ENCODE measurements at regions of chr20 and their contacts with region 1.

Region 1: GRCh38 chr20:5569021-5569420 is 181.2 kb upstream of the SHLD1 start:
- DNase-seq: peak; percentile 68
- ATAC-seq: peak; percentile 87
- H3K4me3 Mint-ChIP-seq: no peak overlapping the region
- H3K27ac Mint-ChIP-seq: peak overlapping the region; percentile 37
- H3K4me1 Mint-ChIP-seq: peaks cover 15% of the 10 kb centered on the region
- H3K27me3 Mint-ChIP-seq: no peaks in the 10 kb centered on the region

Region 2: DNA sequence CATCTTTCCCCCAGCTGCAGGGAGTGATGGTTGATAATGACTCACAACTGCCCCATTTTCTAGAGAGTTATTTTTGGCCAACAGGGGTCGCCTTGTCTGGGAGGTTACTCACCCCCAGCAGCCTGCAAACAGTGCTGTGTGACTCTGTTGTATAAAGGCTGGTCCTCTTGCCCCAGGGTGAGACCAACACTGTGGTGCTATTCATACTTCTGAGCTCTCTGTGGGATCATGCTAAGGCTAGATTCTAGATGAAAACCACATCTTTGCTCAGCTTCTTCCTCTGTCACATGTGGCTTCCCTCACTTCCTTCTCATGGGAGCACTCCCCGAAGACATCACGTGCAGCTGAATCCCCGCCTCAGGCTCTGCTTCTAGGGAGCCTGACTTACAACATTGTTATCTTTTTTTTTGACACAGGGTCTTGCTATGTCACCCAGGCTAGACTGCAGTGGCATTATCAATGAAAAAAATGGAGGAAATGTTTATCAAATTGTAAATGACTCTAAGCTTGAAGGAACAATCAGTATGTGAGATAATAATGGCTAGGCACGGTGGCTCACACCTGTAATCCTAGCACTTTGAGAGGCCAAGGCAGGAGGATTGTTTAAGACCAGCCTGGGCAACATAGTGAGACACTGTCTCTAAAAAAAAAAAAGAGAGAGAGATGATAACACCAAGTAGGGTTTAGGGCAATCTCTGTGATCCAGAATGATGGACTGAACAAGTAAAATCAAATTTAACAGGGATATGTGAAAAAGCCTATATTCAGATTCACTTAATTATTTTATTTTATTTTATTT is 512.0 kb before region 1 on chr20:
- CTCF ChIA-PET with region 1: no interaction called
- POLR2A ChIA-PET with region 1: no interaction called
- DNase-seq: peak; percentile 90
- ATAC-seq: peak; percentile 100
- H3K4me3 Mint-ChIP-seq: no peak overlapping the region
- H3K27ac Mint-ChIP-seq: peak overlapping the region; percentile 87
- H3K4me1 Mint-ChIP-seq: peaks cover 31% of the 10 kb centered on the region
- H3K27me3 Mint-ChIP-seq: peaks cover 1% of the 10 kb centered on the region

Region 3: DNA sequence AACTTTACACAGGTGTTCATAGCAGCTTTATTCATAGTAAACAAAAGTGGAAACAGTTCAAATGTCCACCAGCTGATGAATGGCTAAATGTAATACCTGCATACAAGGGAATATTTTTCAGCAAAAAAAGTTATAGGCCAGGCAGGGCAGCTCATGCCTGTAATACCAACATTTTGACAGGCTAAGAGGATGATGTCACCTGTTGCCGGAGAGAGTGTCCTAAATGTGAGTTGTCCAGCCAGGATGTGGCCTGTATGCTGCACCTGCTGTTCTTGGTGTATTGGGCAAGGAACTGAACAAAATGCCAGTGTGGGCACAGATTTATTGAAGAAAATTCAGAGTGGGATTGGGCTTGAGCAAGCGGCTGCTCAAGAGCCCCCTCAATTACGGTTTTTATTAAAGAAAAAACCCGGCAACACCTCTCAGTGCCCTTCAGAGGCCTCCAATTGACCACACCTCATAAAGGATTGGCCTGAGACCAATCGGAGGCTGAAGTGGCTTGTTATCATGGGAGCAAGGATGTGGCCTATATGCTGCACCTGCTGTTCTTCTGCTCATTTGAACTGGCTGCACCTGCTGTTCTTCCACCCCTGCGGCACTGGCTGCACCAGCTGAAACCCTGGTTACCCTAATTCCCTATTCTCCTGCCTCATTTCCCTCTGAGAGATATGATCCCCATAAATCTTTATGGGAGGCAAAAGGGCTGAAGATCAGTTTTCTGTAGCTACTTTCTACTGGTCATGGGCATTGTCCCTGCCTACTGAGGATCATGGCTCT is 88.0 kb before region 1 on chr20:
- CTCF ChIA-PET with region 1: no interaction called
- POLR2A ChIA-PET with region 1: no interaction called
- DNase-seq: no peak
- ATAC-seq: no peak
- H3K4me3 Mint-ChIP-seq: no peak overlapping the region
- H3K27ac Mint-ChIP-seq: no peak overlapping the region
- H3K4me1 Mint-ChIP-seq: peaks cover 23% of the 10 kb centered on the region
- H3K27me3 Mint-ChIP-seq: peaks cover under 1% of the 10 kb centered on the region

Region 4: DNA sequence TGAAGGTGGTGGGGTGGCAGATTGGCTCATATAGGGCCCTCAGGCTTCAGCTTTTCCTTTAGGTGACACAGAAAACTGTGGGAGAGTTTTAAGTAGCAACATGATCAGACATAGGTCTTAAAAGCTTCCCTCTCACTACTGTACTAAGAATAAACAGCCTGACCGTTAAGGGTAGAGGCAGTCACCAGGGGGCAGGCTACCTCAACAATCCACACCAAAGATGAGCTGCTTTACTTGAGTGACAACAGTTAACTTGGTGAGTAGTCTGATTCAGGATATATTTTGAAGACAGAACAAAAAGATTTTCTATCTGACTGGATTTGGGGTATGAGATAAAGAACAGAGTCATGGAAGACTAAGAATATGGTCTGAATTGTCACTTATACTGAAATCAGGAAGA is 11.9 kb before region 1 on chr20:
- CTCF ChIA-PET with region 1: interaction called, 67 read pairs
- POLR2A ChIA-PET with region 1: no interaction called
- DNase-seq: peak; percentile 73
- ATAC-seq: peak; percentile 82
- H3K4me3 Mint-ChIP-seq: no peak overlapping the region
- H3K27ac Mint-ChIP-seq: peak overlapping the region; percentile 16
- H3K4me1 Mint-ChIP-seq: no peaks in the 10 kb centered on the region
- H3K27me3 Mint-ChIP-seq: no peaks in the 10 kb centered on the region

Region 5: DNA sequence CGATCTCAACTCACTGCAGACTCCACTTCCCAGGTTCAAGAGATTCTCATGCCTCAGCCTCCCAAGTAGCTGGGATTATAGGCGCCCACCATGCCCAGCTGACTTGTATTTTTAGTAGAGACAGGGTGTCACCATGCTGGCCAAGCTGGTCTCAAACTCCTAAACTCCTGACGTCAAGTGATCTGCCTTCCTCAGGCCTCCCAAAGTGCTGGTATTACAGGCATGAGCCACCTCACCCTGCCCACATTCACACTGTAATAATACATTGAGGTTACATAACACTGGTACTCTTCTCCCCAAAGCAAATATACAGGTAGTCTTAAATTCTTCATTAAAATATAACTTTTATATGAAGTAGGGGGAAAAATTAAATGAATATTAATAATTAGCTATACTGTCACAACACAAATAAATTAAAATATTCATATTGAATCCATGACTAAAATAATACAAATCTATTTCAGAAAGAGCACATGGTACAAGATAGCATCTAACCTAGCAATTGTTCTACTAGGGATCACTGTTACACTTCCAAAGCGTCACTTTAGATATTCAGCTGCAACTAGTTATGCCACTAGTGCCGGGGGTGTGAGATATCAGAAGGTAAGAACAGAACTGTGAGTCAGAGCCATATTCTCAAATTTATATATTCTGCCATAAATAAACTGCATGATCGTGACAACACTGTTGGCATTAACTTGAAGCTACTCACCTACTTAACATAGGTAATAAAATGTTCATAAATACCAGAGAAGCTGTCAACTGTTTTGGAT is 12.1 kb after region 1 on chr20:
- CTCF ChIA-PET with region 1: interaction called, 11 read pairs
- POLR2A ChIA-PET with region 1: no interaction called
- DNase-seq: no peak
- ATAC-seq: no peak
- H3K4me3 Mint-ChIP-seq: no peak overlapping the region
- H3K27ac Mint-ChIP-seq: no peak overlapping the region
- H3K4me1 Mint-ChIP-seq: peaks cover 5% of the 10 kb centered on the region
- H3K27me3 Mint-ChIP-seq: no peaks in the 10 kb centered on the region

Region 6: DNA sequence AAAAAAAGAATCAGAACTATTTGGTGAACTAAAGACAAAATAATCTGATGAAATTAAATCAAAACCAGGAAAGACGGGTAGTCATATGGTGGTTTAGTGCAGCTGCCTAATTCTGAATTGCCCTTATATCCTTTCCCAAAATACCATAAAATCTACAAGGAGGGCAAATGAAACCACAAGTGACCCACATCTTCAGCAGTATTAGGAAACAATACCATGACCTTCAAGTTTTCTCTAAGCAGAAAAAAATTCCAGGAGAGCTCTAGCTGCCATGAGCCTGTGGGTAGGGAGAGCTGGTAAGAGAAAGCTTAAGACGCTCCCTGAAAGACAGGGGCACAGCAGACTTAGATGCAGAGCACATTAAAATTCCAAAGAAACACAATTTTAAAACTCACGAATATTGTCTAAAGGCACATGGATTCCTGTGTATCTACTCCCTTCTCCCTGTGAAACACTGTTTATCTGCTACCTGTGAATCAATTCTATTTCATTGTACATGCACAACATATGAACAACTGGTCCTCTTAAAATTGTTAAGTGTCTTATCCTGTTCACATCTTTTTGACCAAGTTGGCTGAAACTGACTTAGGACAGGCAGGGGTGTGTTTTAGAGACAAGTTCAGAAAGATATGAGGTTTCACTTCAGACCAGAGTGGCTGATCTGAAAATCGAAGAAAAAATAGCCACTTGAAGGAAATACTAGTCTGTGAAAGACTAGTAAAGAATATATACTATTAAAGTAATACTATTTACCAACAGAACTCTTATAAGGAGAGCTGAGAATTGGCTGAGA is 27.6 kb after region 1 on chr20:
- CTCF ChIA-PET with region 1: interaction called, 19 read pairs
- POLR2A ChIA-PET with region 1: no interaction called
- DNase-seq: no peak
- ATAC-seq: no peak
- H3K4me3 Mint-ChIP-seq: no peak overlapping the region
- H3K27ac Mint-ChIP-seq: no peak overlapping the region
- H3K4me1 Mint-ChIP-seq: peaks cover 57% of the 10 kb centered on the region
- H3K27me3 Mint-ChIP-seq: no peaks in the 10 kb centered on the region

Region 7: GRCh38 chr20:5608442-5609161 is 39.6 kb after region 1 on chr20:
- CTCF ChIA-PET with region 1: interaction called, 10 read pairs
- POLR2A ChIA-PET with region 1: no interaction called
- DNase-seq: no peak
- ATAC-seq: no peak
- H3K4me3 Mint-ChIP-seq: peak overlapping the region; percentile 97
- H3K27ac Mint-ChIP-seq: peak overlapping the region; percentile 78
- H3K4me1 Mint-ChIP-seq: peaks cover 60% of the 10 kb centered on the region
- H3K27me3 Mint-ChIP-seq: no peaks in the 10 kb centered on the region

Region 8: DNA sequence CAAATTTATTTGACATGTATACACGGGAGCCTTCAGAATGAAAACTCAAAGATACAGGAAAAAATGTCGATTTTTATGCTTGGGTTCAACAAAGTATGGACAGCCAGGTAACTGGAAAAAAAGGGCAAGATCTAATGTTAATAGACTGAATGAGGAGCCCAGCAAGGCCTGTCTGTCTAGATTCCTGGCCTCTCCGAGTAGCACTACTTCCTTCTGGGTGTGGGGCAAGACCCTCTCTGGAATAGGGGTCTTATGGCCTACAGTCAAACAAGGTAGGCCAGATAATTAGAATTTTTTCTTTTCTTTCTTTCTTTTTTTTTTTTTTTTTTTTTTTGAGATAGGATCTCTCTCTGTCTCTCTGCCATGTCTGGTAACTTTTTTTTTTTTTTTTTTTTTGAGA is 67.8 kb after region 1 on chr20:
- CTCF ChIA-PET with region 1: no interaction called
- POLR2A ChIA-PET with region 1: no interaction called
- DNase-seq: no peak
- ATAC-seq: no peak
- H3K4me3 Mint-ChIP-seq: no peak overlapping the region
- H3K27ac Mint-ChIP-seq: no peak overlapping the region
- H3K4me1 Mint-ChIP-seq: no peaks in the 10 kb centered on the region
- H3K27me3 Mint-ChIP-seq: no peaks in the 10 kb centered on the region

Region 9: GRCh38 chr20:5731753-5732366 is 162.8 kb after region 1 on chr20:
- CTCF ChIA-PET with region 1: no interaction called
- POLR2A ChIA-PET with region 1: no interaction called
- DNase-seq: no peak
- ATAC-seq: no peak
- H3K4me3 Mint-ChIP-seq: no peak overlapping the region
- H3K27ac Mint-ChIP-seq: no peak overlapping the region
- H3K4me1 Mint-ChIP-seq: peaks cover under 1% of the 10 kb centered on the region
- H3K27me3 Mint-ChIP-seq: peaks cover 7% of the 10 kb centered on the region

Measured in activated CD8-positive, alpha-beta T cell treated with anti-CD3 and anti-CD28 coated beads, Interleukin-2, amount 10 ng/mL, durations not matched to agents 7 days and 5 days (primary cell).